A673 (cell line): ENCODE measurements at regions of chrX and their contacts with region 1.

Region 1: GRCh38 chrX:107894038-107894437 is 68.4 kb downstream of the MID2 start:
- DNase-seq: peak; percentile 63
- H3K4me3 ChIP-seq: no peak overlapping the region
- H3K27ac ChIP-seq: no peak overlapping the region
- H3K4me1 ChIP-seq: no peaks in the 10 kb centered on the region
- H3K27me3 ChIP-seq: no peaks in the 10 kb centered on the region
- CTCF ChIP-seq: peak; percentile 72

Region 2: DNA sequence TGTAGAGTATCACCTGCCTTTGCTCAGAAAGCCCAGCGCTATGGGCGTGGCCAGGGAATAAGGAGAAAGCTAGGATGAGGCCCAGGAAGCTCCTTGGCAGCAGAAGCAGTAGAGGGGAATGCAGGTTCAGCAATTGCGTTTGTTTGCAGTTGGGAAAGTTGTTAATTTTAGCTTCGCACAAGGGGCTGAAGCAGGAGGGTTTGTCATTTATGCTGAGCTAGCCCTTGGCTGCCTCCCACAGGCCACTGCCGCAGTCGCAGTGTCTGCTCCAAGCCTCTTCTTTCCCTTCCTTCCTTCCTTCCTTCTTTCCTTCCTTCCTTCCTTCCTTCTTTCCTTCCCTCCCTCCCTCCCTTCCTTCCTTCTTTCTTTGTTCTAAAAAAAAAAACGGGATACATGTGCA is 423.1 kb before region 1 on chrX:
- CTCF ChIA-PET with region 1: no interaction called
- POLR2A ChIA-PET with region 1: no interaction called
- intact Hi-C with region 1: no loop called
- DNase-seq: no peak
- H3K4me3 ChIP-seq: no peak overlapping the region
- H3K27ac ChIP-seq: no peak overlapping the region
- H3K4me1 ChIP-seq: no peaks in the 10 kb centered on the region
- H3K27me3 ChIP-seq: no peaks in the 10 kb centered on the region
- CTCF ChIP-seq: no peak; the same call in 1 of the 2 replicates

Region 3: GRCh38 chrX:107537815-107538214 is 356.2 kb before region 1 on chrX:
- CTCF ChIA-PET with region 1: no interaction called
- POLR2A ChIA-PET with region 1: no interaction called
- intact Hi-C with region 1: loop called (anchors 5 kb)
- DNase-seq: peak; percentile 21
- H3K4me3 ChIP-seq: no peak overlapping the region
- H3K27ac ChIP-seq: no peak overlapping the region
- H3K4me1 ChIP-seq: no peaks in the 10 kb centered on the region
- H3K27me3 ChIP-seq: no peaks in the 10 kb centered on the region
- CTCF ChIP-seq: peak; percentile 62

Region 4: DNA sequence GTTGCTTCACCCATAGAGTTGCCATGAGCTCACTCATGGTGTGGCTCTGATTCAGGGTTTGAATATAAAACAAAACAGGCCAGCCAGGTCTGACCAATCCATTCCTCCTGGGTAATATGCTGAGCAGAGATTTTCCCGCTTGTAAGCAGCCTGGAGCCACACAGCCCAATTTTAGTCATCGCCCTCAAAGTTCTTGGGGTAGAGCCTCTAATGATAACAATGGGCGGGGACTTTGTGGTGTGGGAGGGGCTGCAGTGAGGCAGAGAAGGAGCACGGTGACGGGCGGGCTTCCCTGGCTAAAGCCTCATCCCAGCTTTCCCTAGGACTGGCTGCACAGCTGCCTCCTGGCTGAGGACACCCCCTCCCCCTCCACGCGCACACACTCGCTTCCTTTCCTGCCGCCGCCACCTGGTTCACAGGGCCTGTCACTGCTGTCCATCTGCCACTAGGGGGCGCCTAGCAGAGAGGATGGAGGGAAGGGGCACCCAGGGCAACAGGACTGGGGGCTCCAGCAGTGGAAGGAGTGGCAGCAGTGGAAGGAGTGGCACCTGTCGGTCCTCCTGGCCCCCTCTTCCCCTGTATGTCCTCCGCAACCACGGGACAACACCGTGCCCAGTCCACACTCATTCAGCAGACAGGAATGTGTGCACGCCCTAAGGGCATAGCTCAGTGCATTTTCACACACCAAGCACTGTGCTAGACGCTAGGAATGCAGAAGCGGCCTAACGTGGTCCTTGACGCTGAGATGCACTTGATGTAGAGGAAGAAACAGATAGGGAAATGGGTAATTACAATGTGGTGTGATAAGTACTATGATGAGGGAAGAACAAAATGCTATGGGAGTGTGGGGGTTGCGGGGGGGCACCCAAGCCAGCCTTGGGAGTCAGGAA is 238.9 kb before region 1 on chrX:
- CTCF ChIA-PET with region 1: no interaction called
- POLR2A ChIA-PET with region 1: no interaction called
- intact Hi-C with region 1: loop called (anchors 2 kb)
- DNase-seq: peak; percentile 65
- H3K4me3 ChIP-seq: no peak overlapping the region
- H3K27ac ChIP-seq: no peak overlapping the region
- H3K4me1 ChIP-seq: no peaks in the 10 kb centered on the region
- H3K27me3 ChIP-seq: no peaks in the 10 kb centered on the region
- CTCF ChIP-seq: peak; percentile 85

Region 5: GRCh38 chrX:107731831-107732502 is 162.1 kb before region 1 on chrX:
- CTCF ChIA-PET with region 1: no interaction called
- POLR2A ChIA-PET with region 1: no interaction called
- intact Hi-C with region 1: no loop called
- DNase-seq: no peak
- H3K4me3 ChIP-seq: no peak overlapping the region
- H3K27ac ChIP-seq: no peak overlapping the region
- H3K4me1 ChIP-seq: peaks cover 11% of the 10 kb centered on the region
- H3K27me3 ChIP-seq: no peaks in the 10 kb centered on the region
- CTCF ChIP-seq: no peak

Region 6: DNA sequence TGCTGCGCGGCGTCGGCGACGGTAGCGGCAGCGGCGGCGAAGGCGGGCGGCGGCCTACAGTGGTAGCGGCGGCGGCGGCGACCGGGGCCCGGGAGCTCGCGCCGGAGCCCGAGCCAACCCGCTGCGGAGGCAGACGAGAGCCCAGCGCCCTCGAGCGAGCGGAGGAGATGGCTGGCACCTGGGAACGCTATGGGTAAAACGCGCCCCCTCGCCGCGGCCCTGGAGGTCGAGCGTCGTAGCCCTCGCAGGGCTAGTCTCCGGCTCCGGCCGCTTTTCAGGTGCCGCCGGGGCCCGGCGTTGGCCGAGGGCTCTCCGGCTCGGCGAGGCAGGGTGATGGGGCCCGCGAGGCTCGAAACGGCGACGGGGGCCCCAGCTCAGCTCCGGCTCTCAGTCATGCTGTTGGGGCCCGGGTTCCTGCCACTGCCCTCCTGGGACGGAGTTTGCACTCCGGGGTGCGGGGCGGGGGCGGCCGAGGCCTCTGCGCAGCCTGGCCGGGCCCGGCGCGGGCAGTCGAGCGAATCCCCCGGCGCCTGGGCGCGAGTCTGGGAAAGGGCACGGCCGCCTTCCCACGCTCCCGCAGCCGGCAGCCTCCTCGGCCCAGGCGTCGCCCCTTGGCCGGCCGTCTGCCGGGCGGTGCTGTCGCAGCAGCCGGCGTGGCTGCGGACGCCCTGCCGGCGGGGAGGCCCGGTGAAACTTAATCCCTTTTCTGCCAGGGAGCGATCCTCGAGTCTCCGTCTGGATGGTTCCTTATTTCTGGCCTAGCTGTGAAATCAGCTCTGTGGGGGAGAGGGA is 67.6 kb before region 1 on chrX:
- CTCF ChIA-PET with region 1: interaction called, 11 read pairs
- POLR2A ChIA-PET with region 1: no interaction called
- intact Hi-C with region 1: no loop called
- DNase-seq: peak; percentile 11
- H3K4me3 ChIP-seq: peak overlapping the region; percentile 28
- H3K27ac ChIP-seq: no peak overlapping the region
- H3K4me1 ChIP-seq: no peaks in the 10 kb centered on the region
- H3K27me3 ChIP-seq: peaks cover 21% of the 10 kb centered on the region
- CTCF ChIP-seq: no peak